ENCODE measurements at regions of chr1 and their contacts with region 1.

Region 1: GRCh38 chr1:61851849-61852669 is 109.8 kb downstream of the PATJ start:
- DNase-seq: no peak
- H3K4me3 ChIP-seq: no peak overlapping the region
- H3K27ac ChIP-seq: peak overlapping the region; percentile 23 to 38
- H3K4me1 ChIP-seq: peaks cover 0 to 50% (median 6%) of the 10 kb centered on the region in 4 donors
- H3K27me3 ChIP-seq: no peaks in the 10 kb centered on the region
- CTCF ChIP-seq: peak; percentile 75 to 78

Region 2: GRCh38 chr1:59971464-59971911 is 1880.6 kb before region 1 on chr1:
- intact Hi-C with region 1: loop called (anchors 10 kb)
- DNase-seq: peak; percentile 68 to 81
- H3K4me3 ChIP-seq: no peak overlapping the region
- H3K27ac ChIP-seq: no peak overlapping the region
- H3K4me1 ChIP-seq: peaks cover 0 to 7% (median 5%) of the 10 kb centered on the region in 4 donors
- H3K27me3 ChIP-seq: no peaks in the 10 kb centered on the region
- CTCF ChIP-seq: peak; percentile 91

Region 3: DNA sequence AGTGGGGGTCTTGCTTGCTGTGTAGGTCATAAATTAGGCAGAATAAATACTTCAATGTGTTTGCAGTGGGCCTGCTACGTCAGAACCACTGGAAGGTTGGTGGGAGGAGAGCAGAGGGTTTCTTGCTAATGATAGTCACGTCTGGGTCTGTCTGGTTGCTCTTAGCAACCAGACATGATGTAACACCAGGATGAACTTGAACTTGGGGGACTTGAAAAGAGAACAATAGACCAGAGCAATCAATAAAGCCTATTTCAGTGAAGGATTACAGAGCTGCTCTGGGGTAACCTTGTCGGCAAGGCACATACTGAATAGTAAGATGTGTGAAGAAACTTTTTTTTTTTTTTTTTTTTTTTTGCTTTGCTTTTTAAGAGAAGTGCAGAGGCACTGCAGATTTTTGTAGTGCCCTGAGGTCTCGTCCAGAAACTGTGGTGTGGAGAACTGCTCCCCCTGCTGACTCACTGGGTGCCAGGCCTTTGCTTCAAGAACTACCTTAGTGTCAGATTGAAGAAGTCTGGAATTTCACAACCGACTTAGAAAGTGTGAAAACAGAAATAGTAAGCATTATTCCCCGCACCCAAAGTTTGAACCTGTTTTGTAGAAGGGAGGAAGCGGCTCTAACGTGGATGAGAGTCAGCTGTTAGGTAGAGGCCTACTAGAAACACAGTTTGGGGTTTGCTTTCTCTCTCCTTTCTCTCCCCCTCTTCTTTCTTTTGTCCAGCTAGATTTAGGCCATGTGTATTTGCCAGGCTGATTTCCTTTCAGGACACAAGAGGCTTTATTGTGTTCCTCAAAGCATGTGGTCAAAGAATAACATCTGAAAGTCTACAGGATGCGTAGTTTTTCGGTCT is 398.7 kb before region 1 on chr1:
- intact Hi-C with region 1: loop called (anchors 5 kb)
- DNase-seq: peak; percentile 95 to 97
- H3K4me3 ChIP-seq: no peak overlapping the region
- H3K27ac ChIP-seq: peak overlapping the region; percentile 88 to 93
- H3K4me1 ChIP-seq: peaks cover 0 to 58% (median 48%) of the 10 kb centered on the region in 4 donors
- H3K27me3 ChIP-seq: no peaks in the 10 kb centered on the region
- CTCF ChIP-seq: peak; percentile 74

Region 4: GRCh38 chr1:61741711-61742619 is 110.1 kb before region 1 on chr1 and contains the start of gene PATJ:
- intact Hi-C with region 1: loop called (anchors 10 kb)
- DNase-seq: peak; percentile 46 to 77
- H3K4me3 ChIP-seq: peak within 1 kb of the TSS; percentile 72 to 92
- H3K27ac ChIP-seq: peak within 1 kb of the TSS; percentile 94 to 99
- H3K4me1 ChIP-seq: peaks cover 0 to 26% (median 10%) of the 10 kb centered on the region in 4 donors
- H3K27me3 ChIP-seq: no peaks in the 10 kb centered on the region
- CTCF ChIP-seq: no peak